ENCODE measurements at regions of chr18 and their contacts with region 1.

Region 1: GRCh38 chr18:21904856-21905255 is 164.3 kb downstream of the MIB1 start:
- DNase-seq: peak; percentile 9
- ATAC-seq: no peak
- H3K4me3 ChIP-seq: no peak overlapping the region
- H3K27ac ChIP-seq: no peak overlapping the region
- H3K4me1 ChIP-seq: no peaks in the 10 kb centered on the region
- H3K27me3 ChIP-seq: no peaks in the 10 kb centered on the region
- CTCF ChIP-seq: no peak

Region 2: DNA sequence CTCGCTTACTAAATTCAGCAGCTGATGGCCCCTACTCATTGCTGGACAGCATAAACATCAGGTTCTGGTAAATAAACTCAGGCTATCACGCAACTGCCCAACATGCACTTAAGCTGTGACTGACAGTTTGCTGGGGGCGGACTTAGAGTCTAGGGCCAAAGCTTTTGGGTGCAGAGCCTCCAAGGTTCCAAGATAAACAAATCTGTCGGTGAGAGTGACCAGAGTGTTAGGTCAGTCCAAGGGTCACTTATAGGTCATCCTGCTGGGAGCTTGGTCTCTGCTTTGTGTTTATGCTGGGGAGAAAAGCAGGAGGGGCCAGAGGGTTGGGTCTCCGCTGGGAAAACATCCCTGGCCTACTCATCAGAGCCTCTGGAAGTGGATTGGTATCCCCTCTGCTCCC is 75.9 kb after region 1 on chr18:
- CTCF ChIA-PET with region 1: no interaction called
- POLR2A ChIA-PET with region 1: interaction called, 10 read pairs
- intact Hi-C with region 1: no loop called
- DNase-seq: no peak
- ATAC-seq: no peak
- H3K4me3 ChIP-seq: no peak overlapping the region
- H3K27ac ChIP-seq: no peak overlapping the region
- H3K4me1 ChIP-seq: no peaks in the 10 kb centered on the region
- H3K27me3 ChIP-seq: no peaks in the 10 kb centered on the region
- CTCF ChIP-seq: no peak